Cardiac septum (tissue), 1 donor: ENCODE measurements at regions of chr16 and their contacts with region 1.

Region 1: GRCh38 chr16:78237841-78238240 is 138.4 kb downstream of the WWOX start:
- DNase-seq: no peak

Region 2: GRCh38 chr16:78122774-78123315 is 115.0 kb before region 1 on chr16:
- intact Hi-C with region 1: loop called (anchors 2 kb)
- DNase-seq: no peak

Region 3: DNA sequence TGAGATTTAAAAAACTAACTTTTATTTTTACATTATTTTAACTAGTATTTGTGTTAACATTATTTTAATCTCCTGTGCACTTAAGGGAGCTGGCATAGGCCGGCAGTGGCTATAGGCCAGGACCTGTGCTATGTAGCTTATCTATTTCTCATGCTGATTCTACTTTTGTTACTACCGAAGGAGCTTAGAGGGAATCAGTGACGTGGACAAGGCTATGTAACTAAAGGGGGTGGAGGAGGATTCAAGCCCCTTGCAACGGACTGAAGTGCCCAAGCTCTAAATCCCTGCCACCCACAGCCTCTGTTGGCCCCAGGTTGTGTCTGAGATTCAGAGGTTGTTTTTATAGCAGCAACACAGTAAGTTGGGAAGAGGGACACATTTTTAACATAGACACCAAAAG is 218.0 kb after region 1 on chr16:
- intact Hi-C with region 1: no loop called
- DNase-seq: no peak